PC-3 (cell line): ENCODE measurements at regions of chr11 and their contacts with region 1.

Region 1: DNA sequence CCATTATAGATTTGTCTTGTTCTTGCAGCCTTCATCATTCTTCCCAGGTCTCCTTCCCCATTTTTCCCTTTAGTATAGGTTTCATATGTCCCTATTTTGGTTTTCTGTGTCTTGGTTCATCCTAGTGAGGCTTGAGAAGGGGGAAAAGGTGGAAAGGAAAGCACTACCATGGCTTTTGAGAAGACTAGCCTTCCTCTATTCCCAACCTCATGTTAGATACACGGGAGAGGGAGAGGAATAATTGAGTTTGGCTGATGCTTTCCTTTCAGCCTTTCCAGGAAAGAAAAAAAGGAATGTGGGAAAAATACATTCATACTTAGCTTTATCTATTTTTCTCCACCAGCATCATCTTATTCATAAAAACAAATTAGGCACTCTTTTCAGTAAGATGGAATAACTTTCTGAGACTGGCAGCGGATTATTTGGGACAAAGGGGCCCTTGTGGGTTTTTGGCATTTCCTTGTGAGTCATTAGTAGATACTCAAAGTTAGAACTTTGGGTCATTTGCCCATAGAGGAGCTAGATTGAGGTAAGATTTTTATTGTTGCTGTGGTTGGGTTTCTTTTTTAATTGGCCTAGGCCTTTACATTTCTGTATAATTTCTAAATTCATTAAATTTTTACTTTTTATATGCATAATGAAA is 23.8 kb downstream of the CAPRIN1 start:
- DNase-seq: peak; percentile 78
- ATAC-seq: peak; percentile 90
- H3K4me3 ChIP-seq: peak overlapping the region; percentile 46
- H3K27ac ChIP-seq: peak overlapping the region; percentile 81
- H3K4me1 ChIP-seq: peaks cover 29% of the 10 kb centered on the region
- H3K27me3 ChIP-seq: no peaks in the 10 kb centered on the region
- CTCF ChIP-seq: no peak

Region 2: GRCh38 chr11:34056672-34057071 is 18.6 kb before region 1 on chr11:
- CTCF ChIA-PET with region 1: no interaction called
- POLR2A ChIA-PET with region 1: no interaction called
- intact Hi-C with region 1: loop called (anchors 2 kb)
- DNase-seq: no peak
- ATAC-seq: no peak
- H3K4me3 ChIP-seq: peak overlapping the region; percentile 99
- H3K27ac ChIP-seq: no peak overlapping the region
- H3K4me1 ChIP-seq: peaks cover 30% of the 10 kb centered on the region
- H3K27me3 ChIP-seq: no peaks in the 10 kb centered on the region
- CTCF ChIP-seq: no peak